CD4-positive, alpha-beta memory T cell (primary cell): ENCODE measurements at regions of chrX and their contacts with region 1.

Region 1: GRCh38 chrX:63754860-63755582 is 30.0 kb downstream of the ARHGEF9 start:
- DNase-seq: peak; percentile 82 to 90 (median 87)
- H3K4me3 ChIP-seq: peak overlapping the region; percentile 74 to 77
- H3K4me3 Mint-ChIP-seq: peak overlapping the region; percentile 94 to 99 (median 98)
- H3K27ac ChIP-seq: peak overlapping the region; percentile 79
- H3K27ac Mint-ChIP-seq: peak overlapping the region; percentile 94 to 99 (median 98)
- H3K4me1 ChIP-seq: peaks cover 20% of the 10 kb centered on the region
- H3K4me1 Mint-ChIP-seq: peaks cover 13 to 33% (median 15%) of the 10 kb centered on the region in 4 donors
- H3K27me3 ChIP-seq: no peaks in the 10 kb centered on the region
- H3K27me3 Mint-ChIP-seq: no peaks in the 10 kb centered on the region

Region 2: GRCh38 chrX:63560601-63561218 is 194.3 kb before region 1 on chrX:
- CTCF ChIA-PET with region 1: no interaction called
- POLR2A ChIA-PET with region 1: interaction called, 3 read pairs
- intact Hi-C with region 1: loop called (anchors 10 kb)
- DNase-seq: peak; percentile 54 to 71 (median 61)
- H3K4me3 ChIP-seq: peak overlapping the region; percentile 69 to 88
- H3K4me3 Mint-ChIP-seq: peak overlapping the region; percentile 92 to 99 (median 97)
- H3K27ac ChIP-seq: peak overlapping the region; percentile 57
- H3K27ac Mint-ChIP-seq: peak overlapping the region; percentile 87 to 95 (median 93)
- H3K4me1 ChIP-seq: peaks cover 12% of the 10 kb centered on the region
- H3K4me1 Mint-ChIP-seq: peaks cover 10 to 35% (median 17%) of the 10 kb centered on the region in 4 donors
- H3K27me3 ChIP-seq: no peaks in the 10 kb centered on the region
- H3K27me3 Mint-ChIP-seq: no peaks in the 10 kb centered on the region

Region 3: DNA sequence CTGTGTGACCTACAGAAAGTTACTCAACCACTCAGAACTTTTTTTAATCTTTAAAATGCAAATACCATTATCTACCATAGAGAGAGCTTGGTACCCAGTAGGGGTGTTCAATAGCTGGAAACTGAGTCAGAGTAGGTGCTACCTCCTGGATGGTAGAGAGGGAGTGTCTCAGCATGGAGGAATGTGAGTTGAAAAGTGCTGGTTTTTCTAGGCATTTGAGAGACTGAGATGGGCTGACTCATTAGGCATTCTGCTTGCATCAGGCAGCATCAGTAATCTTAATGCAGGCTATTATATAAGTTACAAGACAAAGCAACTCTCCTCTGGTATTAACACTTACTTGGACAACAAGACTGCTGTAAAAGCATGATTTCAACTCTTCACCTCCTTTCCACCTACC is 100.9 kb after region 1 on chrX:
- CTCF ChIA-PET with region 1: no interaction called
- POLR2A ChIA-PET with region 1: no interaction called
- intact Hi-C with region 1: no loop called
- DNase-seq: no peak
- H3K4me3 ChIP-seq: no peak overlapping the region
- H3K4me3 Mint-ChIP-seq: no peak overlapping the region
- H3K27ac ChIP-seq: no peak overlapping the region
- H3K27ac Mint-ChIP-seq: no peak overlapping the region
- H3K4me1 ChIP-seq: no peaks in the 10 kb centered on the region
- H3K4me1 Mint-ChIP-seq: no peaks in the 10 kb centered on the region
- H3K27me3 ChIP-seq: no peaks in the 10 kb centered on the region
- H3K27me3 Mint-ChIP-seq: peaks cover 0 to 2% of the 10 kb centered on the region in 2 donors

Region 4: DNA sequence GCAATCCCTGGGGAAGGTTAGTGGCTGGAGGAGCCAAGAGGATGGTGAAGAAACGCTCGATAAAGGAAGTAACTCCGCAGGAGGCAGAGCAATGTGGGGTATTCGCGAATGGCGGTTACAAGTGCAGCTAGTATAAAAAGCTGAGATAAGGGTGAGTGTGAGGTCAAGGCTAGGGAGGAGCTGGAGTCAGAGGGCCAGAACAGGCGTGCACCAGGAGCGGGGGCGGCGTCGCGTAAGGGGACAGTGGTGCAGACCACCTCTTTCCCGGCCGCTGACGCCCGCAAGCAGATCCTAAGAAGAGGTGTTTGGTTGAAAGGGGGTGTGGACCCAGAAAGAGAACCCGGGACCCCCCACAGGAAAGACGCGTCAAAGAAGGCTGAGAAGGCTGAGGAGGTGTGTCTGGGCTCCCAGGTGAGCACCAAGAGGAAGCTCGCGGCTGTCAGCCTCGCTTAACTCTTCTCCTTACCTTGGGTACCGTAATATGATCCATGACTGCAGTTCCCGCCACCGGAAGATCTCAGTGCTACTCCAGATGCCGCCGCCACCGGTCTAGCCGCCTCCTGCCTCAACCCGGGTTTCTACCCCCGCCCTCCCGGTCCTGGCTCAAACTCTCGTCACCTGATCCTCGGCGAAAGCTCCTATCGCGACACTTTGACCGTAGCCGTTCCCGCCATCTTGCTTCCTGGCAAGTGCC is 640.0 kb after region 1 on chrX and contains the start of gene MTMR8:
- CTCF ChIA-PET with region 1: no interaction called
- POLR2A ChIA-PET with region 1: interaction called, 5 read pairs
- intact Hi-C with region 1: loop called (anchors 2 kb)
- DNase-seq: peak; percentile 77 to 83 (median 80)
- H3K4me3 ChIP-seq: peak within 1 kb of the TSS; percentile 52 to 79
- H3K4me3 Mint-ChIP-seq: peak within 1 kb of the TSS; percentile 90 to 97 (median 94)
- H3K27ac ChIP-seq: peak within 1 kb of the TSS; percentile 54
- H3K27ac Mint-ChIP-seq: peak within 1 kb of the TSS; percentile 86 to 93 (median 91)
- H3K4me1 ChIP-seq: peaks cover 15% of the 10 kb centered on the region
- H3K4me1 Mint-ChIP-seq: peaks cover 12 to 56% (median 32%) of the 10 kb centered on the region in 4 donors
- H3K27me3 ChIP-seq: no peaks in the 10 kb centered on the region
- H3K27me3 Mint-ChIP-seq: no peaks in the 10 kb centered on the region
- total RNA-seq, gene MTMR8: 7.6 to 8.3 TPM

Region 5: DNA sequence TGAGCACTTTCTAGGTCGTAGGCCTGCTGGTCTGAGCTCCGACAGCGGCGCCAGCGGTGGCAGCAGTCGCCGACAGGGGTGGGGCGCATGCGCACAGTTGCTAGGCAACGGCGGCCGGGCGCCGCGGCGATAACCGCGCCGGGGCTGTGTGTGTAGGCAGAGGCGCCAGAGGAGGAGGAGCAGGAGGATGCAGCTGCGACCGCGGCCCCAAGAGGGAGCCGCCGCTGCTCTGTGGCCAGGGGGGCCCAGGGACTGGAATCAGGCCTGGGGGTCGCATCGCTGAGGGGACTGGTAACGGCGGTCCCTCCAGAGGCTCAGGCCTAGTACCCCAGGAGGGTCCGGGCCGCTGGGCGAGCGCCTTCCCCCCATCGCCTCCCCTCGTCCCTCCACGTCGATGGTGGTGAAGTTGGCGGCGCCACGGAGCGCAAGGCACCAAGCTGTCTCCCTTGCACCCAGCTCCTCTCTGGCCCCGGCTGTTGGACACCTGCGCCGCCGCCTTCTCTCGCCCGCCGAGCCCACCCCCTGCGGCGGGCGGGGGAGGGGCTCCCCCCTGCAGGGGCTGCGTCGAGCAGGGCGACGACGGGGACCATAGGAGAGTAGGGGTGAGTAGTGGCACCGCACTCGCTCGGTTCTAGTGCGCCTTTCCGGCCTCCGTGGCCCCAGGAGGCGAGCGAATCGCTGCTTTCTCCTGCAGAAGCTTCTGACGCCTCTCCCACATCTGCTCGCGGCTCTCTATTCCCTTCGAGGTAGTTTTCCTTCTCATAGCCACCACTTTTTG is 1279.8 kb after region 1 on chrX:
- CTCF ChIA-PET with region 1: no interaction called
- POLR2A ChIA-PET with region 1: interaction called, 3 read pairs
- intact Hi-C with region 1: loop called (anchors 10 kb)
- DNase-seq: peak; percentile 76 to 79 (median 79)
- H3K4me3 ChIP-seq: peak within 1 kb of the TSS; percentile 42 to 54
- H3K4me3 Mint-ChIP-seq: peak within 1 kb of the TSS; percentile 91 to 97 (median 93)
- H3K27ac ChIP-seq: peak within 1 kb of the TSS; percentile 58
- H3K27ac Mint-ChIP-seq: peak within 1 kb of the TSS; percentile 93 to 98 (median 95)
- H3K4me1 ChIP-seq: peaks cover 15% of the 10 kb centered on the region
- H3K4me1 Mint-ChIP-seq: peaks cover 10 to 26% (median 11%) of the 10 kb centered on the region in 4 donors
- H3K27me3 ChIP-seq: no peaks in the 10 kb centered on the region
- H3K27me3 Mint-ChIP-seq: no peaks in the 10 kb centered on the region